Aorta (tissue), 5 donors: ENCODE measurements at regions of chr14 and their contacts with region 1.

Region 1: DNA sequence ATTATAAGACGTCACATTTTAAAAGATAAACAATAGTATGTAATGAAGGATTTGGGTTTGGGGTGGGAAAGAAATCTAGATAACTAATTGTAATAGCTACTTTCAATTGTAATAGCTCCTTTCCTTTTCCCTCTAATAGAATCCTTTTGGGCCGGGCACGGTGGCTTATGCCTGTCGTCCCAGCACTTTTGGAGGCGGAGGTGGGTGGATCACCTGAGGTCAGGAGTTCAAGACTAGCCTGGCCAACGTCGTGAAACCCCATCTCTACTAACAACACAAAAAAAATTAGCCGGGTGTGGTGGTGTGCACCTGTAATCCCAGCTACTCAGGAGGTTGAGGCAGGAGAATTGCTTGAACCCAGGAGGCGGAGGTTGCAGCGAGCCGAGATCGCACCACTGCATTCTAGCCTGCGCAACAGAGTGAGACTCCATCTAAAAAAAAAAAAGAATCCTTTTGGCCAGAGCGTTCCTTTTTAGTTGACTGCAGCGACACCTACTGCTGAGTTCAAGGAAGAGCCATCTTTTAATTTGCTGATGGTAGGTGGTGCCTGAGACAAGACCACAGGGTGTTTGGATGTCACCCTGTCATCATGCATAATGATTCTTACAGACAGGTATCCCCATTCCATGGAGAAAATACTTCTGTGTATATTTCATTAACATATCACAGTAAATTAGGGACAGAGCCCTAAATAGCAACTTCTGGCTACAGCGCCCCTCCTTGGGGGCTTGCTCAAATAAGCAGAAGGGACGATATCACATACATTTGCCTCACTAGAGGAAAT is 79.5 kb downstream of the ARMH4 start:
- DNase-seq: no peak
- ATAC-seq: peak; percentile 91
- H3K4me3 ChIP-seq: no peak overlapping the region
- H3K27ac ChIP-seq: no peak overlapping the region
- H3K4me1 ChIP-seq: peaks cover 0 to 2% of the 10 kb centered on the region in 2 donors
- H3K27me3 ChIP-seq: no peaks in the 10 kb centered on the region

Region 2: GRCh38 chr14:57486767-57487379 is 585.6 kb before region 1 on chr14:
- intact Hi-C with region 1: loop called (anchors 1 to 5 kb)
- DNase-seq: no peak
- ATAC-seq: no peak
- H3K4me3 ChIP-seq: no peak overlapping the region
- H3K27ac ChIP-seq: no peak overlapping the region
- H3K4me1 ChIP-seq: no peaks in the 10 kb centered on the region
- H3K27me3 ChIP-seq: no peaks in the 10 kb centered on the region

Region 3: GRCh38 chr14:57686304-57686703 is 386.2 kb before region 1 on chr14:
- intact Hi-C with region 1: loop called (anchors 5 kb)
- DNase-seq: no peak
- ATAC-seq: peak; percentile 63
- H3K4me3 ChIP-seq: no peak overlapping the region
- H3K27ac ChIP-seq: no peak overlapping the region
- H3K4me1 ChIP-seq: peaks cover 0 to 3% of the 10 kb centered on the region in 2 donors
- H3K27me3 ChIP-seq: no peaks in the 10 kb centered on the region

Region 4: DNA sequence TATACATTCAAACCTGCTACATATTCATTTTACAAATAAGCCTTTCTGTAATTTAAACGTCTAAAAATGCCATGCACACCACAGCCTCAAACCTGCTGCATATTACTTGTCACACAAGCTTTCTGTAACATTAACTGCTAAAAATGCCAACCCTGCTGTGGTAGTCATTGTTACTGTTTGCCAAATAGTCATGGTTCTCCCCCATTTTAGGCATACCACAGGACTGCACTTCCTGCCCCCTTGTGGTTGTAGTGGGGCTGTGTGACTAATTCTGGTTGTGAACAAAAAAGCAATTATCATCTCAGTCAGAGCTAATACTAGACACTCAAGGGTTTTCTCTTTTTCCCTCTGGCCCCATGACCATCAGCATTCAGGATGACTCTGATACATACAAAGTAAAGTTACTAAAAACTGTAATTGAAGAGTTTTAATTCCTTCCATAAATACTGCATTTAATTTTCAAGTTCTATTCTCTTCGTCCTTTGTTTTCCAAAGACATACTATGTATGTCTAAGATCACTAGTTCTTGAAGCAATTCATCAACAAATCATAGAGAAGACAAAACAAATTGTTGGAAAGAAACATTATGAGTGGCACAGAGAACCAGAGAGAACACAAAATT is 200.9 kb before region 1 on chr14:
- intact Hi-C with region 1: loop called (anchors 5 kb)
- DNase-seq: no peak
- ATAC-seq: no peak
- H3K4me3 ChIP-seq: no peak overlapping the region
- H3K27ac ChIP-seq: no peak overlapping the region
- H3K4me1 ChIP-seq: no peaks in the 10 kb centered on the region
- H3K27me3 ChIP-seq: no peaks in the 10 kb centered on the region

Region 5: DNA sequence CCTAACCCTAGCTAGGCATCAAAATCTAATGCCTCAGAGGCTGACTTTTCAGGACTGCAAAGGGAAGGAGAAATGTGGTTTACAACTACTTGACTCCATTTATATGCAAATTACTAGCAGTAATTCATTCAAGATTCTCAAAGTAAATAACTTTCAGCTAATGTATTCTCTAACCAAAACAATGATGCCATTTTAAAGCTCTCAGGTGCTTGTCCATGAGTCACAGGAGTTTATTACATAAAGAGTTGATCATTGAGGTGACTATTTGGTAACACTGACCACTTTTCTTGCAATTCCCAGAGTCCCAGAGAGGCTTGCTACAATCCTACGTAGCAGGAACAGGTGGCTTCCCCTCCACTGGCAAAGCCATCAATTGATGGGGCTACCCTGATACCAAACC is 97.6 kb before region 1 on chr14:
- intact Hi-C with region 1: loop called in 1 of 2 experiments (anchors 10 kb)
- DNase-seq: no peak
- ATAC-seq: no peak
- H3K4me3 ChIP-seq: no peak overlapping the region
- H3K27ac ChIP-seq: no peak overlapping the region
- H3K4me1 ChIP-seq: peaks cover 2 to 4% of the 10 kb centered on the region in 2 donors
- H3K27me3 ChIP-seq: no peaks in the 10 kb centered on the region

Region 6: GRCh38 chr14:58646479-58646878 is 574.0 kb after region 1 on chr14:
- intact Hi-C with region 1: no loop called
- DNase-seq: no peak
- ATAC-seq: no peak
- H3K4me3 ChIP-seq: no peak overlapping the region
- H3K27ac ChIP-seq: no peak overlapping the region
- H3K4me1 ChIP-seq: no peaks in the 10 kb centered on the region
- H3K27me3 ChIP-seq: no peaks in the 10 kb centered on the region